ENCODE measurements at regions of chr19 and their contacts with region 1.

Region 1: DNA sequence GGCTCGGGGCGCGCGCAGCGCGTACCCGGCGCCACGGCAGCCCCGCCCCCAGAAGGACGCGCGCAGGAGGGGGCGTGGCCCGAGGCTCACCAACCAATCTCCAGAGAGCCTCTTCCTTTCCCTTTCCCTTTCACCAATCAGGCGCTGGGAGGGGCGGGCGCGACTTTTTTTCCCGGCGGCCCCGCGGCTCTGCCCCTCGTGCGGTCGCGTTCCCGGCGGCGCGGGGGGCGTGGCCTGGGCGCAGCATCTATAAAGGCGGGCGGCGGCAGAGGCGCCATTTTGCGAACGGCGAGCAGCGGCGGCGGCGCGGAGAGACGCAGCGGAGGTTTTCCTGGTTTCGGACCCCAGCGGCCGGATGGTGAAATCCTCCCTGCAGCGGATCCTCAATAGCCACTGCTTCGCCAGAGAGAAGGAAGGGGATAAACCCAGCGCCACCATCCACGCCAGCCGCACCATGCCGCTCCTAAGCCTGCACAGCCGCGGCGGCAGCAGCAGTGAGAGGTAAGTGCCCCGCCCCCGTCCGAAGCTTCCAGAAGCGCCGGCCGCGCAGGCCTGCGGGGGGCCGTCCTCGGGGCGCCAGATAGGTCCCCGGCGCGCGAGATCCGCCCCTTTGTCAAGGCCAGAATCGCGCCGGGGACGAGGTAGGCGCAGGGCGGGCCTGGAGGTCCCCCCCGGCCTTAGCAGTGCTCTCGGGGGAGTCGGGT is 12.6 kb downstream of the PEAK3 start:
- DNase-seq: peak; percentile 100
- ATAC-seq: peak; percentile 67
- H3K4me3 Mint-ChIP-seq: peak overlapping the region; percentile 90
- H3K27ac Mint-ChIP-seq: peak overlapping the region; percentile 92
- H3K4me1 Mint-ChIP-seq: peaks cover 31% of the 10 kb centered on the region
- H3K27me3 Mint-ChIP-seq: no peaks in the 10 kb centered on the region

Region 2: DNA sequence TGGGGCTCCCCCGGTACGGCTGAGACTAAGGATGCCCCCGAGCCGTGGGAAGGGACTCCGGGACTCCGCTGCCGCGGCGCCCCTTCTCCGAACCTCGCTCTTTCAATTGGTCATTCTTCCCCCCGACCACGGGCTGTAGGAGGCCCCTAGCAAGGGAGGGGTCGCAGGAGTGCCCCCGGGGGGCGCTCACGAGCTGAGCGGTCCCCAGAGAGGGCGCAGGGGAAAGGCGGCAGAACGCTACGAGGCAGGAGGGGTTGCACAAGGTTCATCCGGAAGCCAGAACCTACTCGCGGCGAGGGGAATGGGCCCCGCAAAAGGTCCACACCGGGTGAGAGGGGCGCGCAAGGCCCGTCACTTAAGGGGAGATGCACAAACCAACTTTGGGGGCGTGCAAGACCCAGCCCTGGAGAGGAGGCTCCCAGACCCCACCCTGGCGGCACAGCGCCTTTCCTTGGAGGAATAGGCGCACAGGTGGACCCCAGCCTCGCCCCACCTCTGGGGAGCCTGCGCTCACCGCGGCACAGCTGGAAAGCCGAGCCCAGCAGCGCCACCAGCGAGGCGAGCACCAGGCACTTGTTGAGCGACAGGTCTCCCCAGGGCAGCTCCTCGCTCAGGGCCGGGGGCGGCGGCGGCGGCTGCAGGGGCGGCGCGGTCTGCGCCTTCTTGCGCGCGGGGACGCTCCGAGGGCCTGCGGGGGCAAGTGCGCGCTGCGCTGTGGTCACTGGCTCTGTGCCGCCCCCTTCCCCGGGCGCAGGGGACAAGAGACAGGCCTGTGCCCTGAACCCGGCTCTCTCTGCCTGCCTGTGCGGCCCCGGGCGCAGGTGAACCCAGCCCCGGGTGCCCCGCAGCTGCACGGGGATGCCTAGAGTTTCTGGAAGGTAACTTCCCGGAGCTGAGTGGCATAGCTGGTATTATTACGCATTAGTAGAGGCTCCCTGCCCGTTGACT is 16.0 kb before region 1 on chr19:
- POLR2A ChIA-PET with region 1: interaction called, 43 read pairs
- DNase-seq: peak; percentile 67
- ATAC-seq: peak; percentile 37
- H3K4me3 Mint-ChIP-seq: peak overlapping the region; percentile 58
- H3K27ac Mint-ChIP-seq: no peak overlapping the region
- H3K4me1 Mint-ChIP-seq: peaks cover 10% of the 10 kb centered on the region
- H3K27me3 Mint-ChIP-seq: peaks cover 22% of the 10 kb centered on the region

Region 3: DNA sequence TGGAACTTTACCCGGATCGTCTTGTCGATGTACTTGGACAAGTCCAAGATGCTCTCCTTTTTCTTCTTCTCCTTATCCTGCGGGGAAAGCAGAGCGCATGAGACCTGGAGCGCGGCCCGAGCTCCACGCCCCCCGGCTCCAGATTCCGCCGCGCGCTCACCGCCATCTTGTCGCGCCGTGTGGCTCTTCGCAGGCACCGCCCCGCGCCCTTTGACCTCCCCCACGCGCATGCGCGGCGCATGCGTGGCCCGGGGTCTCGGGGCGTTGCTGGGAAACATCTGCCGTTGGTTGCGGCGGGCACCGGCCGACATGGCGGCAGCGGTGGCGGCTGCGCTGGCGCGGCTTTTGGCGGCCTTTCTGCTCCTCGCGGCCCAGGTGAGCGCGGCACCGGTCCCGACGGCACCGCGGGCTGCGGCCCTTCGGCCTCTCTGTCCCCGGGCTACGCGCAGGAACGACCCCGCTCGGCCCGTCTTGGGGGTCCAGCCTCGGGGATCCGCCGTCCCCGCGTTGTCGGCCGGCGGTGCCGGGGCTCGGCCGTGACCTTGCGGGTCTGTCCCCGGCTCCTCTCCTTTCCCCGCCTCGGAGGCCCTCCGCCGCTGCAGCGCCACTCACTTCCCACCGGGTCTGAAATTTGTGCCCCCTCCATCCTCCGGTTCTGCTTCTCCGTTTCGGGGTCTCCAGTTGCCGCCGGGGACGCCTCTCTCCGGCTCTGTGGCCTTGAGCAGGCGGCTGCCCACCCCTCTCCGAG is 59.2 kb after region 1 on chr19 and contains the starts of genes LSM7 and SPPL2B:
- POLR2A ChIA-PET with region 1: interaction called, 12 read pairs
- DNase-seq: peak; percentile 98
- ATAC-seq: peak; percentile 50
- H3K4me3 Mint-ChIP-seq: peak within 1 kb of the TSS; percentile 100
- H3K27ac Mint-ChIP-seq: peak within 1 kb of the TSS; percentile 100
- H3K4me1 Mint-ChIP-seq: peaks cover 55% of the 10 kb centered on the region
- H3K27me3 Mint-ChIP-seq: no peaks in the 10 kb centered on the region
- total RNA-seq, gene LSM7: 111 to 125 TPM
- total RNA-seq, gene SPPL2B: 90.6 to 101 TPM

Measured in activated naive CD8-positive, alpha-beta T cell treated with anti-CD3 and anti-CD28 coated beads, Interleukin-2, amount 10 ng/mL, durations not matched to agents 7 days and 5 days (primary cell).